ENCODE measurements at regions of chr17 and their contacts with region 1.

Region 1: DNA sequence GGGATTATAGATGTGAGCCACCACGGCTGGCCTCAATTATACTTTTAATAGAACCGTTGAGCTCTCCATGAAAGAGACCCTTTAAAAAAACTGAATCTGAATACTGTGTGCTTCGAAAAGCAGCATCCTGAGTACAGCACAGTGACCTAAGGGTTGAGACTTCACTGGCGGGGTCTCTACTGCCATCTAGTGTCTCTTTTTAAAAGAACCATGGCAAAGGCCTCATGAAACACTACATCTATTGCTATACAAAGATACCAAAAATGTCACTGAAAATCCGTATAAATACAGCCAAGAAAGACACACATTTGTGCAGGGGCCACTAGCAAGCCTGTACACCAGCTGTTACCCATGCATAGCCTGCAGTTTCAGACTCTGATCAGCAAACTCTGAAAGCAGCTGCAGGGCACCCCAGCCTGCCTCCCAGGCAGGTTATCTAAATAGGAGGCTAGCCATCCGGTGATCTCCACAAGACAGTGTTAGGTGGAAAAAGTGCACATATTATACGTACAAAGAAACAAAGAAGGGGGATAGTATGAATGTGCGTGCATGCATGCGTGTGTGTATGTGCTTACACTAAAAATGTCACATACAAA is 35.3 kb downstream of the NPLOC4 start:
- DNase-seq: no peak
- H3K4me3 ChIP-seq: no peak overlapping the region
- H3K27ac ChIP-seq: no peak overlapping the region
- H3K4me1 ChIP-seq: no peaks in the 10 kb centered on the region
- H3K27me3 ChIP-seq: no peaks in the 10 kb centered on the region
- CTCF ChIP-seq: peak; percentile 9 to 75 (median 74)
- POLR2A ChIP-seq: no peak

Region 2: DNA sequence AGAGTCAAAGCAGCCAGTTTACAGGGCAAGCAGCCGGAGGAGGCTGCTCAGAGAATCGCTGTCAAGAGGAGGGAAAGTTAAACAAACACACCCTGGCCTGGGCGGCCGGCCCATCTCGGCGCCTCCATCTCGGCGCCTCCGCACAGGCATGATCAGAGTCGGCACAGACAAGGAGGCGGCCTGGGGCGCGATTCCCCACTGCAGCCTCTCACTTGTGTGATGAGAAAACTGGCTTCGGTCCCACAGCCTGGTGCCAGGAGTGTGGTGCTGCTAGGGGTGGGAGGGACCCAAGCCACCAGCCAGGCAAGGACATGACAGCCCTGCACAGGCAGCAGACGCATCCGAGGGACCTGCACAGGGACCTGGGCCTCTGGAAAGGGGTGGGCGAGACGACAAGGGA is 324.2 kb before region 1 on chr17:
- intact Hi-C with region 1: loop called (anchors 10 kb)
- DNase-seq: no peak
- H3K4me3 ChIP-seq: no peak overlapping the region
- H3K27ac ChIP-seq: no peak overlapping the region
- H3K4me1 ChIP-seq: no peaks in the 10 kb centered on the region
- H3K27me3 ChIP-seq: no peaks in the 10 kb centered on the region
- CTCF ChIP-seq: no peak
- POLR2A ChIP-seq: no peak

Measured in breast epithelium (tissue), 4 donors.